WTC11 (cell line): ENCODE measurements at regions of chr6 and their contacts with region 1.

Region 1: DNA sequence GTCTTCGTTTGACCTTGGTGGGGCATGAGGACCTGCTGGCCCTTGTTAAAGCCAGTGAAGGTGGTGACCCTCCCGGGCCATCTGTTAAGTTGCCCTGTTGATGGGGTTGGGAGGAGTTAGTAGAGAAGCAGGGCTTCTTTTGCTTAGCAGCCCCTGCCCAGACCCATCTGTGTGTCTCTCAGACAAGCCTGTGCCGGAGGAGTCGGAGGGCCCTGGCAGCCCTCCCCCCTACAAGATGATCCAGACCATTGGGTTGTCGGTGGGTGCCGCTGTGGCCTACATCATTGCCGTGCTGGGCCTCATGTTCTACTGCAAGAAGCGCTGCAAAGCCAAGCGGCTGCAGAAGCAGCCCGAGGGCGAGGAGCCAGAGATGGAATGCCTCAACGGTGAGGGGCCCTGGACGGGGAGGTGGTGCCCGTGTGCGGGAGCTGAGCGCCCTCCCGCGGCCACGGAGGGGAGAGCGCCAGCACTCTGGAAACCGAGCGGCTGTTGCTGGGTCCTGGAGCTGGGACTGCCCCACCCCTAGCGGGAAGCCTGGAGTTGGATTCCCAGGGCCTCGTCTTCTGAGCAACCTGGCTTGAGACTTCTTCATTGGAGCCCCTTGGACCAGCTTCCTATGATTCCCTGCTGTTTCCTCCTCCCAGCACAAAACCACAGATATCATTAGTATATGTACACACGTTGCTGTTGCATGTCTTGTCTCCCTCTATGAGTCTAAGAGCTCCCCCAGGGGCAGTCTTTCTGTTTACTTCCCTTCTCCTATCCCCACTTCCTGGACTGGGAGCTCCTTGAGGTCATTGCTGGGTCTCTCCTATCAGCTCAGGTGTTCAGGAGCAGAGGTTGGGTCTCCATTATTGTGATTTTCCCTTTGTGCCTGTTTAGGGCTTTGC is 27.6 kb upstream of the SRF start:
- DNase-seq: peak; percentile 94
- ATAC-seq: peak; percentile 94
- H3K4me3 Mint-ChIP-seq: peak overlapping the region; percentile 14; the same call in 1 of the 2 replicates
- H3K27ac Mint-ChIP-seq: peak overlapping the region; percentile 90
- H3K4me1 Mint-ChIP-seq: peaks cover 10% of the 10 kb centered on the region
- H3K27me3 Mint-ChIP-seq: no peaks in the 10 kb centered on the region; the same call in 1 of the 2 replicates
- CTCF ChIP-seq: peak; percentile 92

Region 2: DNA sequence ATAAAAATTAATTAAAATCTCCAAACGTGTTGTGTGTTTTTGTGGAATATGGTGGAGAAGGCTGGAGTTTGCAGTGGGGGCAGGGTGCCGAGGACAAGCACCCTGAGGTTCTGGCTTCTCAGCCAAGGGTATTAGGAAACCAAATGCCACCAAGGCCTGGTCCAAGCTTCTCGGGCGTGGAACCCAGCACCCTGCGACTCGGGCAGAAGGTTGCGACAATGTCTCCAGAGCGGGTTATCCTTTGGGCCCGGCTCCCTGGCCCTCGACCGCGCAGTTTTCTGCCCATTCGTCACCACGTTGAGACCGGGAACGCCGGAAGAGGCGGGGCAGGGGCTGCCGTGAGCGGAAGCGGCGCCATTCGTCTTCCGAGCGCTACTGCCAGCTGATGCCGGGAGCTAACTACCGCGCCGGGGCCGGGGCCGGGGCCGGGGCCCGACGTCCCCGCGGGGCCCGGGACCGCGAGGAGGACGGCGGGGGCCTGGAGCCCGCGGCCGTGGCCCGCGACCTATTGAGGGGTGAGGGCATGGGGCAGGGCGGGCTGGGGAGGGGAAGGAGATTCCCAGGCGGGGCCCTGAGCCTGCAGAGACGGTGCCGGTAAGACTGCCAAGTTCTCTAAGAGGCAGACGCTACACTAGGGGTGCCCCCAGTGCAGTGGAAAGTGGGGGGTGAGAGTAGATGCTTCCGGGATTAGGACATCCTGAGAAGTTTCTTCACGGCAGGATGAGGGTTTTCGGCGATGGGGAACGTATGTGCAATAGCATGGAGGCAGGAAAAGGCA is 122.0 kb before region 1 on chr6 and contains the start of gene RRP36:
- CTCF ChIA-PET with region 1: interaction called, 18 read pairs
- POLR2A ChIA-PET with region 1: no interaction called
- DNase-seq: peak; percentile 79
- ATAC-seq: peak; percentile 85
- H3K4me3 Mint-ChIP-seq: peak within 1 kb of the TSS; percentile 98
- H3K27ac Mint-ChIP-seq: peak within 1 kb of the TSS; percentile 96
- H3K4me1 Mint-ChIP-seq: peaks cover 8% of the 10 kb centered on the region
- H3K27me3 Mint-ChIP-seq: no peaks in the 10 kb centered on the region
- CTCF ChIP-seq: no peak
- total RNA-seq, gene RRP36: 65.6 to 81.0 TPM (median 67.9 TPM) in 3 replicates

Region 3: DNA sequence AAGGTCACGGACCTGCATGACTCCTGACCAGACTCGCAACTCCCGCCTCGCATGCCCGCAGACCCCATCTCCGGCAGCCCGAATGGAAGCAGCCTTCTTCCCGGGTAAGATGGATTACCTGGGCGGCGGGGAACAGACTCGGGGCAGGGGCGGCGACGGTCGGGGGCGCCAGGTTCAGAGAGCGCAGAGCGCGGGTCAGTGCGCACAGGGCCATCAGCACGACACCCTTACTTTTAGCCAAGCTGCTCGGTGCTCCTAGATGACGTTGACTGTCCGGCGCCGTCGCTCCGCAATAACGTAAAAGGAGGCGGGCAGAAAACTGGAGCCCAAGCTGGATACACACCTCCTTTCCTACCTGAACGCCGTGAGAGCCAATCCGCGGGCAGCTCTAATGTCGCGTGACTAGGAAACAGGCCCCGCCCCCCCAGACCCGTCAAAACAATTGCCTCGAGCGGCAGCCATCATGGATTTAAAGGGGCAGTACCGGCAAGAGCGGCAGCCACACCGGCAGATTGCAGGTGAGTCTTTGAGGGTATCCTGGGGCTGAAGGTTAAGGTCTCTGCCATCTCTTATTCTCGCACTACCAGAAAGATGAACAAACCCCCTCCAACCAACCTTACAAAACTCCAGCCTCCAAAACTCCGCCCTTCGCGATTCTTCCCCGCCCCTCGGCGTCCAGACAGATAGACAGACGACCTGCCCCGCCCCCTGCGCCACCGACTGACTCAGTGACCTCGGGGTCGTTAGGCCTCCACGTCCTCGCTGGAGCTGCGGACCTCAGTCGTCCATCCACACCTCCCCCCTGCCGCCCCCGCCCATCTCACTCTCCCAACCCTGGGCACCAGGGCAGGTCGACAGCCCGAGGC is 84.1 kb before region 1 on chr6 and contains the starts of genes KLC4 and MRPL2:
- CTCF ChIA-PET with region 1: interaction called, 24 read pairs
- POLR2A ChIA-PET with region 1: interaction called, 8 read pairs
- DNase-seq: peak; percentile 99
- ATAC-seq: peak; percentile 94
- H3K4me3 Mint-ChIP-seq: peak within 1 kb of the TSS; percentile 91
- H3K27ac Mint-ChIP-seq: peak within 1 kb of the TSS; percentile 99
- H3K4me1 Mint-ChIP-seq: peaks cover 21% of the 10 kb centered on the region
- H3K27me3 Mint-ChIP-seq: no peaks in the 10 kb centered on the region
- CTCF ChIP-seq: no peak
- total RNA-seq, gene KLC4: 31.2 to 36.4 TPM (median 35.7 TPM) in 3 replicates
- total RNA-seq, gene MRPL2: 107 to 131 TPM (median 112 TPM) in 3 replicates

Region 4: GRCh38 chr6:43082806-43083655 is 60.4 kb before region 1 on chr6:
- CTCF ChIA-PET with region 1: interaction called, 13 read pairs
- POLR2A ChIA-PET with region 1: no interaction called
- DNase-seq: no peak
- ATAC-seq: no peak
- H3K4me3 Mint-ChIP-seq: no peak overlapping the region
- H3K27ac Mint-ChIP-seq: peak overlapping the region; percentile 42; the same call in 1 of the 2 replicates
- H3K4me1 Mint-ChIP-seq: peaks cover 51% of the 10 kb centered on the region
- H3K27me3 Mint-ChIP-seq: no peaks in the 10 kb centered on the region
- CTCF ChIP-seq: no peak

Region 5: DNA sequence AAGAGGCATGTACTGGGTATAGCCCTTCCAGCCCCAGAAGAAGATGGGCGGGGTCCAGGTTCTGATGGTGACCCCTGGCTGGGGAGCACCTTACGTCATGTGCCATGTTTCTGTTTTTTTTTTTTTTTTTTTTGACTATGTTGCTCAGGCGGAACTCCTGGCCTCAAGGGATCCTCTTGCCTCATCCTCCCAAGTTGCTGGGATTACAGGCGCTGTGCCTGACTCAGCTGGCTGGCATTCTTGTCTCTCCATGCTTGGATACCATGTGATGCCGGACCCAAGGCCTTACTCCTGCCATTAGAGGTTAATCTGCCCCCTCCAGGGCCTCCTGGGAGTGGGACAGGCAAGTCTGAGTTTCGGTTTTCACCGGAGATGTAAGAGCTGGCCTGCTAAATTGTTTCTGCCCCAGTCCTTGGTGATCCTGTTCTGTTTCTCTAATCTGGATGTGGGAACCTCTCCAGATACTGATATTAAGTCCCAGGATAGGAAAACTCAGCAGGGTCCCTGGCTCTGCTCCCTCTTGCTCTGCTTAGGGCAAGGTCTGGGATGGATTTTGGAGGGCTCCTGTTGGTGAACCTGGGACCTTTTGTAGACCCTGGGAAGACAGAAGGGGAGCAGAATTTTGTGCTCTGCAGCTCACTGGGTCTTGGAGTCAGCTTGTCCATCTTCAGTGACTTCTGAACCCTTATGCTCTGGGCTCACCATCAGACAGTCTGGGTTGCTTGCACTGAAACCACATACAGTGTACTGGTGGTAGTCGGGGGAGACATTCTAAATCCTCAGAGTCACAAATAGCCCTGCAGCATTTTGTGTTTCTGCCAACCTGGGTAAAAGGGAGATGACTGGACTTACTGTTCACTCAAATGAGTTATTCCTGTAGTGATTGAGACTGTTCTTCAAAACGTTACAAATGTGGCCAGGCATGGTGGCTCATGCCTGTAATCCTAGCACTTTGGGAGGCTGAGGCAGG is 22.3 kb before region 1 on chr6:
- CTCF ChIA-PET with region 1: interaction called, 24 read pairs
- POLR2A ChIA-PET with region 1: no interaction called
- DNase-seq: no peak
- ATAC-seq: peak; percentile 38
- H3K4me3 Mint-ChIP-seq: no peak overlapping the region
- H3K27ac Mint-ChIP-seq: peak overlapping the region; percentile 63
- H3K4me1 Mint-ChIP-seq: peaks cover 40% of the 10 kb centered on the region
- H3K27me3 Mint-ChIP-seq: no peaks in the 10 kb centered on the region
- CTCF ChIP-seq: no peak

Region 6: DNA sequence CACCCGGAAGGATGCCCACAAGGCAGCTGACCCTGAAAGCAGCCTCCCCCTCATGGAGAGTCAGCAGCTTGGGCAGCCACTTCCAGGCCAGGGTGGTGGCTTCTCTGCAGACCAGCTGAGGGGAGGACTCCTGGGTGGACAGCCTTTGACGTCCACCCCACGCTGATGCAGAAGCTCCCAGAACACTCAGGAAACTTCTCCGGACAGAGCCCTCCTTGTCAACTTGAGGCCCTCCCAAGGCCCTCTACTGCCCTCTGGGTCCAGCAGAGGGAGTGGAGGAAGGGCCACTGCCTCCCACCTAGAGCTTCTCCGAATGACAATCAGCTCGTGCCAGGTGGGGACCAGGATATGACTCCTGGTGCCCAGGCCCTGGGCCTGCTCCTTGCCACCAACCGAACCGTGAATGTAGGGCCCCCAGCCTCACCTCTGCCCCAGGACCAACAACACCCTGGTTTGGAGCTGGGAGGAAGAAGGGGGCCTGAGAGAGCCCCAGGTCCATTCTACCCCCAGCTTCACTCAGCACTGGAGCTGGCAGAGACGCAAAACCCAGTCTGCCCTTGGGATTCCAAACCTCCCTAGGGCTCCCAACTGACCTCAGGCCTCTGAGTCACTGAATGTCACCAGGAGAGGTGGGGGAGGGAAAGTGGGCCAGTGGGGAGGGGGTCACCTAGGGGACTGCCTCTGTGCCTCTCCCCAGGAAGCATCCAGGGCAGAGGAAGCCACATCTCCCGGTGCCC is 143.7 kb after region 1 on chr6:
- CTCF ChIA-PET with region 1: no interaction called
- POLR2A ChIA-PET with region 1: no interaction called
- DNase-seq: no peak
- ATAC-seq: peak; percentile 59
- H3K4me3 Mint-ChIP-seq: 0 out of 2 replicates have a peak overlapping the region, but pooled peaks have one; percentile 40
- H3K27ac Mint-ChIP-seq: no peak overlapping the region
- H3K4me1 Mint-ChIP-seq: peaks cover 7% of the 10 kb centered on the region
- H3K27me3 Mint-ChIP-seq: peaks cover 21% of the 10 kb centered on the region
- CTCF ChIP-seq: no peak